ENCODE measurements at regions of chr20 and their contacts with region 1.

Region 1: DNA sequence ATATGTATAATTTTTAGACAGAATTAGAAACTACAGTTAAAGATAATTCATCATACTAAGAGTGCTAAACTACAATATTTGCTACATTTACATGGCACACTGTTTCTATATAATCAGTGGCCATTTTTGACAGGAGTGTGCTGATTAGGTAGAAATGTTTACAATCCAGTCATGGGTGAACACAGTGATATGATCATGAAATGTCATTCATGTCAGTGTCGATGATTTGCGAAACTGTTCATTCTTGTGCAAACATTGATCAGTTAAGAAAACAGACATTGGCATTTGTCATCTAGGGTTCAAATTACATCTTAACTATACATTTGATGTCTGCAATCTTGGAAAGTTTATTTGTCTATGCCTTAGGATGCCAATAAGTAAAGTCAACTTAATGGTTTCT is 474.9 kb downstream of the DOK5 start:
- DNase-seq: no peak
- H3K4me3 ChIP-seq: no peak overlapping the region
- H3K27ac ChIP-seq: no peak overlapping the region
- H3K4me1 ChIP-seq: no peaks in the 10 kb centered on the region
- H3K27me3 ChIP-seq: no peaks in the 10 kb centered on the region
- CTCF ChIP-seq: no peak
- POLR2A ChIP-seq: no peak

Region 2: GRCh38 chr20:54704032-54704893 is 246.0 kb before region 1 on chr20:
- intact Hi-C with region 1: loop called (anchors 5 kb)
- DNase-seq: no peak
- H3K4me3 ChIP-seq: no peak overlapping the region
- H3K27ac ChIP-seq: no peak overlapping the region
- H3K4me1 ChIP-seq: no peaks in the 10 kb centered on the region
- H3K27me3 ChIP-seq: no peaks in the 10 kb centered on the region
- CTCF ChIP-seq: no peak
- POLR2A ChIP-seq: no peak

Measured in breast epithelium (tissue), 4 donors.